ENCODE measurements at regions of chr12 and their contacts with region 1.

Region 1: DNA sequence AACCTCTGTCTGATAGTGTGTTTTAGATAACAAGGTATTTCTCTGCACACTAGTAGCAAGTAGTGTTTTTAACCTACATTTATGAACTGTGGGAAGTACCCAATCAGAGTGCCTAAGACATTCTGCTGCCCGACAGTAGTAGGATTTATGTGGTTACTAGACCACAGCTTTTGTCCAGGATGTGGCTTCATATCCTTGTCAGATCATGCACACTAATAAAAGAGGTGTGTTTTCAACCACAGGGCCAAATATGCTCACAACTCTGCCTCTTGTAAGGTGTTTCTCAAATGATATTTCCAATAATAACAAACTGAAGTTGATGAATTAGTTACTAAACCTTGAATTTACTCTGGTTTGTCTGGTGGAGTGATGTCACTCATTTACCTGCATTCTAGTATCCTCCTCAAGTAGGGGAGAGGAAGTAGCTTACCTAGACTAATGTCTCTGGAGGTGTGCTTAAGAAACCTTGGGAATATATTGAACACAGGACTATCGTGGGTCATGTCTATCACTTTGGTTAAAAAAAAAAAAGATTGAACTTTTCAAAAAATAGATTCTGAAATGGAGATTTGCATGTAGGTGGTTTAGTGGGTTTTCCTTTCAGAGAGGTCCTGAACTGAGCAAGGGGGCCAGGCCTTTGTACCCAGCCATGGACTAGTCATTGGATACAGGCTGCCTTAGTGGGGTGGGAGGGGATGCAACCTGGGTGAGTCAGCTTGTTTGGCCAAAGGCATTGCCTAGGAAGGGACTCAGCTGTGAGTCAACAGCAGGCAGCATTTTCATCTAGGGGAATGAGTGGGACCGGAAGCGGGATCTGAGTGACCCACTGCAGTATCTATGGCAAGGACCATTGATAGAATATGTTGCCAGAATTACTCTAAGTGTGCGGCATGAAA is 14.1 kb downstream of the FBXW8 start:
- DNase-seq: peak; percentile 66
- H3K4me3 Mint-ChIP-seq: no peak overlapping the region
- H3K27ac Mint-ChIP-seq: no peak overlapping the region
- H3K4me1 Mint-ChIP-seq: peaks cover 42% of the 10 kb centered on the region
- H3K27me3 Mint-ChIP-seq: peaks cover 56% of the 10 kb centered on the region

Region 2: GRCh38 chr12:116737774-116738700 is 186.8 kb before region 1 on chr12 and contains the starts of genes RNFT2 and SPRING1:
- intact Hi-C with region 1: loop called (anchors 2 kb)
- DNase-seq: peak; percentile 99
- H3K4me3 Mint-ChIP-seq: peak within 1 kb of the TSS; percentile 87
- H3K27ac Mint-ChIP-seq: peak within 1 kb of the TSS; percentile 42
- H3K4me1 Mint-ChIP-seq: peaks cover 18% of the 10 kb centered on the region
- H3K27me3 Mint-ChIP-seq: no peaks in the 10 kb centered on the region
- total RNA-seq, gene RNFT2: 11.0 and 14.4 TPM in 2 replicates
- total RNA-seq, gene SPRING1: 32.4 and 36.1 TPM in 2 replicates

Region 3: DNA sequence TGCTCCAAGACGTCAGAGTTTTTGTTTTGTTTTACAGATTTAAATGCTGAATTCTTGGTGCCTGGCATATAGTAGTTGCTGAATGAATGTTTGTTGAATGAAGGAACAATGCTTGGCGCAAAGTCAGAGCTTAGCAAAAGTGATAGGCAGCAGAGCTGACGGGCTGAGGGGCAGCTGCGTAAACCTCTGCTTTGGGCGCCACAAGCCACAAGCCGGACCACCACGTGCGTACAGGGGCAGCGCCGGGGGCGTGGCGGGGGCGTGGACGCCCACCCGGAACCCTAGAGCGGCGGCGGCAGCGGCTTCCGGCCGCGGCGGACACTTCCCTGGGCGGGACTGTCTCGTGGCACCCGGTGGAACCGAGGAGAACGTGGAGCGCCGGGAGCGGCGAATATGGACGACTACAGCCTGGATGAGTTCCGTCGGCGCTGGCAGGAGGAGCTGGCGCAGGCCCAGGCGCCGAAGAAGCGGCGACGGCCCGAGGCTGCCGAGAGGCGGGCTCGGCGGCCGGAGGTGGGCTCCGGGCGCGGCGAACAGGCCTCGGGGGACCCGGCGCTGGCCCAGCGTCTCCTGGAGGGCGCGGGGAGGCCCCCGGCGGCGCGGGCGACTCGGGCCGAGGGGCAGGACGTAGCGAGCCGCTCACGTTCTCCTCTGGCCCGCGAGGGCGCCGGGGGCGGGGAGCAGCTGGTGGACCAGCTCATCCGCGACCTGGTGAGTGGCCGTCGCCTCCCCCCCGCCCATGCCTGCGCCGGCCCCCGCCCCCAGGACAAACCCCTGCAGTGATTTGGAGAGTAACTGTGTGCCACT is 14.0 kb before region 1 on chr12 and contains the start of gene FBXW8:
- intact Hi-C with region 1: loop called (anchors 1 kb)
- DNase-seq: peak; percentile 44
- H3K4me3 Mint-ChIP-seq: peak within 1 kb of the TSS; percentile 79
- H3K27ac Mint-ChIP-seq: peak within 1 kb of the TSS; percentile 44
- H3K4me1 Mint-ChIP-seq: peaks cover 11% of the 10 kb centered on the region
- H3K27me3 Mint-ChIP-seq: peaks cover 40% of the 10 kb centered on the region
- total RNA-seq, gene FBXW8: 3.3 and 3.5 TPM in 2 replicates

Region 4: DNA sequence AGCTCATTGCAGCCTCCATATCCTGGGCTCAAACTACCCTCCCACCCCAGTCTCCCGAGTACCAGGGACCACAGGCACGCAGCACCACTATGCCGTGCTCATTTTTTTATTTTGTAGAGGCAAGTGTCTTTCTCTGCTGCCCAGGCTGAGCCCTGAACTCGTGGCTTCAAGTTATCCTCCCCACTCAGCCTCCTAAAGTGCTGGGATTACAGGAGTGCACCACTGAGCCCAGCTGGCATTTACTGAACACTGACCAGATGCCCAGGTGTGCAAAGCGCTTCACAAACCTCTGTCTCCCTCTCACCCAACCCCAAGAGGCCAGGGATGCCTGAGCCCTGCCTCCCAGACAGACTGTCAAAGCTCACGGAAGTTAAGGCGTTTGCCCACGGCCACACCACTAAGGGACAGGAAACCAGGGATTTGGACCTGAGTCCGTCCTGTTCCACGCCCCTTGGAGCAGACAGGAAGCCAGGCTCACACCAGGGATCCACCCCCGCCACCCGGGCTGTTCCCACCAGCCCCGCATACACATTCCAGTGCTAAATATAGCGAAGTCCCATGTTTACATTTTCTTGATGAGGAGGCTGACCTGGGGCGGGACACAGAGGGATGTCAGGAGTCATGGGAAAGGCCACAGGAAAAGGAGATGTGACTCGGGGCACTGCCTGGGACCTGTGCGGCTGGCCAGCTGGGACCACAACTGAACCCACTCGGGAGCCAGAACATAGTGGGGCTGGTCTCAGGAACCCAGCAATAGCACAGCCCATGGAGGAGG is 123.2 kb after region 1 on chr12:
- intact Hi-C with region 1: no loop called
- DNase-seq: no peak
- H3K4me3 Mint-ChIP-seq: no peak overlapping the region
- H3K27ac Mint-ChIP-seq: no peak overlapping the region
- H3K4me1 Mint-ChIP-seq: no peaks in the 10 kb centered on the region
- H3K27me3 Mint-ChIP-seq: no peaks in the 10 kb centered on the region

Region 5: GRCh38 chr12:117098361-117099217 is 173.8 kb after region 1 on chr12:
- intact Hi-C with region 1: loop called (anchors 2 kb)
- DNase-seq: peak; percentile 22
- H3K4me3 Mint-ChIP-seq: peak overlapping the region; percentile 77
- H3K27ac Mint-ChIP-seq: no peak overlapping the region
- H3K4me1 Mint-ChIP-seq: peaks cover 21% of the 10 kb centered on the region
- H3K27me3 Mint-ChIP-seq: peaks cover 21% of the 10 kb centered on the region

Region 6: DNA sequence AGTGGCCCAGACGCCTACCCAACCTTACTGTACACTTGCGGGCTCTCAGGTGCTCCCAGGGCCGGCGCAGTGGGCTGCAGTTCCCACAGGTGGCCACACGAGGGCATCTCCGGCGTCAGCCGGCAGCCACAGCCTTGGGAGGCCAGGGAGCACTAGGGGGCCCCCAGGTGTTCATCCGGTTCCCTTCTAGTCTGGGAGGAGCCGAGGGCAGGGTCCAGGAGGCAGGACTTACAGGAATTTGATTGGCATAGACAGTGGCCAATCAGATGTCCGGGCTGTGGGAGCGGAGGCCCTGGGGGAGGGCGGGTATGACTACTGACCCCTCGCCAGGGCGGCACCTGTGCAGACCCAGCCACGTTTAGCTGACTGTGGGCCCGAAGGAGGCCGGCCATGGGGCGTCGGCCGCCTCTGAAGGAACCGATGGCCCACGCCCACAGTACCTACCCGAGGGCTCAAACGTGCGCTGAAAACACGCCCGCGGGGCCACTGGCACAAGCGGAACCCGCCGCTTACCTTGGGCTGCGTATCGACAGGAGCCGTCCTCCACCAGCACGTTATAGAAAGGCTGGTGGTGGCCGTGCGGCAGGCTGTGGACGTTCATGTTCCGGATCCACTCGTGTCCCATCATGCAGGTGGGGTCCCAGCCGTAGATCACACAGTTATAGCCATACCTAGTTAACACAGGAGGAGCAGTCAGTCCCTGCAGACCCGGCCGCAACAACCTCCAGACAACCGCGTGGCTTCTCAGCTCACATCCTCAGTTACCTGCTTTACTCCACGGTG is 230.7 kb after region 1 on chr12:
- intact Hi-C with region 1: loop called (anchors 5 kb)
- DNase-seq: peak; percentile 57
- H3K4me3 Mint-ChIP-seq: no peak overlapping the region
- H3K27ac Mint-ChIP-seq: no peak overlapping the region
- H3K4me1 Mint-ChIP-seq: peaks cover 21% of the 10 kb centered on the region
- H3K27me3 Mint-ChIP-seq: no peaks in the 10 kb centered on the region

Measured in activated T-helper 2 cell treated with anti-CD3 and anti-CD28 coated beads, Interferon-gamma antibody, Interleukin-2, Interleukin-4, amounts not matched to agents 10 μg/mL and 5 μg/mL and 100 μg/mL, durations not matched to agents 14 hours and 24 hours and 36 hours (primary cell).